Activated B cell treated with CpG ODN at 0.5 μM for 24 hours (primary cell): ENCODE measurements at regions of chr13 and their contacts with region 1.

Region 1: GRCh38 chr13:102854675-102855074 is 8.8 kb downstream of the ERCC5 start:
- DNase-seq: no peak
- ATAC-seq: no peak
- H3K4me3 Mint-ChIP-seq: no peak overlapping the region
- H3K27ac Mint-ChIP-seq: peak overlapping the region; percentile 35
- H3K4me1 Mint-ChIP-seq: peaks cover 9% of the 10 kb centered on the region
- H3K27me3 Mint-ChIP-seq: no peaks in the 10 kb centered on the region
- CTCF ChIP-seq: no peak

Region 2: GRCh38 chr13:102870677-102871415 is 16.2 kb after region 1 on chr13:
- CTCF ChIA-PET with region 1: interaction called, 5 read pairs
- POLR2A ChIA-PET with region 1: no interaction called
- intact Hi-C with region 1: loop called (anchors 2 kb)
- DNase-seq: no peak
- ATAC-seq: peak; percentile 71
- H3K4me3 Mint-ChIP-seq: no peak overlapping the region
- H3K27ac Mint-ChIP-seq: no peak overlapping the region
- H3K4me1 Mint-ChIP-seq: peaks cover 6% of the 10 kb centered on the region
- H3K27me3 Mint-ChIP-seq: no peaks in the 10 kb centered on the region
- CTCF ChIP-seq: peak; percentile 63

Region 3: DNA sequence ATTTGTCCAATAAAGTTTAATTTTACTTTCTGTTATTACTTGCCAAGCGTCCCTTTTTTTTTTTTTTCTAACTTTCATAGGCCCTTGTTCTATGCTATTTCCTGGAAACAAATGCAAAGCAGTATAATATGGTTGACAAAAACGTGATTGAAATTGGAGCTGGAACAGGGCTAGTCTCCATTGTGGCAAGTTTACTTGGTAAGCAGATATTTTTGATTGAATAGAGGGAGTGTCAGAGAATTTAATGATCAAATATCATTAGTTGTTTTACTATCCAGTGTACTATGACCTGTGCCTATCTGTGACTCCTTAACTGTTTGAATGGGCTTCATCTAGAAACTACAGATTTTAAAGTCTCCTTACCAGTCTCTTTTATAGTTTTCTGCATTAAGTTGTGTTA is 37.8 kb after region 1 on chr13:
- CTCF ChIA-PET with region 1: no interaction called
- POLR2A ChIA-PET with region 1: no interaction called
- intact Hi-C with region 1: no loop called
- DNase-seq: no peak
- ATAC-seq: no peak
- H3K4me3 Mint-ChIP-seq: no peak overlapping the region
- H3K27ac Mint-ChIP-seq: no peak overlapping the region
- H3K4me1 Mint-ChIP-seq: no peaks in the 10 kb centered on the region
- H3K27me3 Mint-ChIP-seq: no peaks in the 10 kb centered on the region
- CTCF ChIP-seq: no peak

Region 4: DNA sequence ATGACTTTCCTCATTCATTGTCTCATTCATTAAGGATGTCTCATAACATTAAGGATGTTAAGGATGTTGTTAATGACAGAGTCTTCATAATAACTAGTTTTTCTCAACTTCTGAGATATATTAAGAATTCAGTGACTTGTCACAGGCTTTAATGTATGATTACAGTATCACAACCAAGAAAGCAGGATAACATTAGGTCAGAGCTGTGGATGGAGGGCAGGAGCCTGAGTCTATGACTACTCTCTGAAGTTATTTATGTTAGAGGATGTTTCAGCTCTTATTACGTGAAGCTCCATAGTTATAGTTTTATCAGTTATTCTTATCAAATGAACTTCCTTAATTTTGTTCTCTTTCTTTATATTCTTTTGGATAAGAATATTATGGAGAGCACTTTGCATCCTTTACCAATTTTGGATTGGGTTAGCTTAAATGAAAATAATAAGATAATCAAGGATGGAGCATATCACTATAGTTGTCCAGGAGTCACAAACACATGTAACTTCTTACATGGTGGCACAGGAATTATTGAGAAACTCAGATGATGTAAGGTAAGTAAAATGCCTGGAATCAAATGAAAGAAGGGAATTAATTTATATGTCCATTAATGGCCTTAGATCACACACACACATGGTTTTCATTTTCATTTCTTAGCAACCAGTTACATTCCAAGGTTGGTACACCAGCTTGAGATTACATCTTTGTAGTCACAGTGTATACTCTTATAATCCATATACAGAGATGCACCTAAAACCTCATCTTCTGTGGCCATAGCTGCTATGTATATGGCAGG is 154.6 kb after region 1 on chr13:
- CTCF ChIA-PET with region 1: no interaction called
- POLR2A ChIA-PET with region 1: no interaction called
- intact Hi-C with region 1: no loop called
- DNase-seq: no peak
- ATAC-seq: no peak
- H3K4me3 Mint-ChIP-seq: no peak overlapping the region
- H3K27ac Mint-ChIP-seq: no peak overlapping the region
- H3K4me1 Mint-ChIP-seq: peaks cover 27% of the 10 kb centered on the region
- H3K27me3 Mint-ChIP-seq: no peaks in the 10 kb centered on the region
- CTCF ChIP-seq: no peak